ENCODE measurements at regions of chr4 and their contacts with region 1.

Region 1: GRCh38 chr4:40749717-40750460 is at the start of gene NSUN7:
- DNase-seq: no peak
- ATAC-seq: peak; percentile 46
- H3K4me3 ChIP-seq: peak within 1 kb of the TSS; percentile 30
- H3K27ac ChIP-seq: no peak within 1 kb of the TSS
- H3K4me1 ChIP-seq: no peaks in the 10 kb centered on the region
- H3K27me3 ChIP-seq: peaks cover 26% of the 10 kb centered on the region
- CTCF ChIP-seq: no peak
- POLR2A ChIP-seq: no peak
- RAD21 ChIP-seq: no peak
- total RNA-seq, gene NSUN7: not detected in 2 replicates

Region 2: GRCh38 chr4:40238700-40239548 is 511.0 kb before region 1 on chr4:
- CTCF ChIA-PET with region 1: no interaction called
- POLR2A ChIA-PET with region 1: interaction called, 19 read pairs
- dilution Hi-C with region 1: no loop called
- in situ Hi-C with region 1: no loop called
- intact Hi-C with region 1: no loop called
- DNase-seq: no peak
- ATAC-seq: no peak
- H3K4me3 ChIP-seq: no peak overlapping the region
- H3K27ac ChIP-seq: no peak overlapping the region
- H3K4me1 ChIP-seq: no peaks in the 10 kb centered on the region
- H3K27me3 ChIP-seq: peaks cover 21% of the 10 kb centered on the region
- CTCF ChIP-seq: no peak
- POLR2A ChIP-seq: no peak
- RAD21 ChIP-seq: no peak

Region 3: DNA sequence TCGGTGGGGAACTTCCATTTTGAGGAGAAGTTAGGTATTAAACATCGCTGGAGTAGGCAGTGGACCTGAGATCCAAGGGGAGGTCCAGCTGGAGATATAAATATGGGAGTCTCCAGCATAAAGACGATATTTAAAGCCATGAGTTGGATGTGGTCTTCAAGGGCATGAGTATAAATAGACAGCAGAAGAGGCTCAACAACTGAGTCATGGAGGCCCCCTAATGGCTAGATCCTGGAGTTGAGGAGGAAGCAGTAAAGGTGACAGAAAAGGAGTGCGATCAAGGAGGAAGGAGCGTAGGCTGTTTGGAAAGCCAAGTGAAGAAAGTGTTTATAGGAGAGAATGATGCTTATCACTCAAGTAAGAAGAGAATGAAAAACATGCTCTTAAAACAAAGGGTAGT is 482.5 kb after region 1 on chr4:
- CTCF ChIA-PET with region 1: no interaction called
- POLR2A ChIA-PET with region 1: no interaction called
- dilution Hi-C with region 1: no loop called
- in situ Hi-C with region 1: loop called (anchors 25 kb)
- intact Hi-C with region 1: no loop called
- DNase-seq: no peak
- ATAC-seq: no peak
- H3K4me3 ChIP-seq: no peak overlapping the region
- H3K27ac ChIP-seq: no peak overlapping the region
- H3K4me1 ChIP-seq: no peaks in the 10 kb centered on the region
- H3K27me3 ChIP-seq: peaks cover 4% of the 10 kb centered on the region; the same call in 1 of the 2 replicates
- CTCF ChIP-seq: no peak; the same call in 1 of the 2 replicates
- POLR2A ChIP-seq: no peak
- RAD21 ChIP-seq: peak; percentile 18; the same call in 1 of the 2 replicates

Measured in IMR-90 (cell line).